ENCODE measurements at regions of chr1 and their contacts with region 1.

Region 1: DNA sequence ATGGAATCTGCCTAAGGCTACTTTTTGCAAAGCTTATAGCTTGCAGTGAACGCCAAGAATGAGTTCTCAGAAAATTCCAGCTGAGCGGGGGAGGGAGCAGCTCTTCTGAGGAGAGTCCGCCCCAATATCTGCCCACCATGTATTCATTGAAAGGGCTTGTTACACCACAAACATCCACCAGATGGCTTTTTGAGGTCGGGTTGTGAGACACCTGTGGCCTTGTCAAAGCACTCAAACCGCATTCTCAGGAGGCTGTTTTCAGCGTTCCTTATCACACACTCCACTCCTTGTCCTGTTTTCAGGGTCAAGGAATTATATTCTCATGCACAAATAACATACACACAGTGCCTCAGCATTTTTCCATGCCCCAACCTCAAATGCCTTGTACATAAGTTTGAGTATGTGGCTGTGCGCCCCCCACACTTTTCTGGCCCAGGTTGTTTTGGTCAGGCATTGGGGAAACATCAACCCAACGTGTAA is 3.9 kb upstream of the C4BPB start:
- DNase-seq: no peak
- ATAC-seq: peak; percentile 75

Region 2: GRCh38 chr1:206143537-206144172 is 941.1 kb before region 1 on chr1:
- intact Hi-C with region 1: no loop called
- DNase-seq: no peak
- ATAC-seq: no peak

Region 3: GRCh38 chr1:207268337-207268736 is 183.6 kb after region 1 on chr1:
- intact Hi-C with region 1: no loop called
- DNase-seq: no peak
- ATAC-seq: no peak

Region 4: DNA sequence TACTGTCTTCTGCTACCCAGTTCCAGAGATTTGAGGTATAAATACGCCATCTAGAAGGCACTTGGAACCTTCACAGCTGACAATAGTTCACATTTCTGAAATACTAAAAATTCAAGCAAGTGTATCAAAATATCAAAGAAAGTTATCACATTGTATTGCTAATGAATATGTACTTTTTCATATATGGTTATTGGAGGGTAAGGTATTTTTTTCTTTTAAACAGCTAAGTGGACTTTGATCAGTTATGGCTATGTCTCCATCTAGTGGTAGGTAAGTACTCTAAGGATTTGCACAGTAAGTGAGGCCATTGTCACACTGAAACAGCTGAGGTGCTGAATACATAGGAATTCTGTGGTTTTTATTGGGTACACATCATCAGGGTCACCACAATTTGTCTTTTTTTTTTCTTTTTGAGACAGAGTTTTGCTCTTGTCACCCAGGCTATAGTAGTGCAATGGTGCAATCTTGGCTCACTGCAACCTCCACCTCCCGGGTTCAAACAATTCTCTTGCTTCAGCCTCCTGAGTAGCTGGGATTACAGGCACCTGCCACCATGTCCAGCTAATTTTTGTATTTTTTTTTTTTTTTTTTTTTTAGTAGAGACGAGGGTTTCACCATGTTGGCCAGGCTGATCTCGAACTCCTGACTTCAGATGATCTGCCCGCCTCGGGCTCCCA is 320.2 kb after region 1 on chr1:
- intact Hi-C with region 1: loop called (anchors 5 kb)
- DNase-seq: no peak
- ATAC-seq: peak; percentile 73

Region 5: GRCh38 chr1:207499573-207499972 is 414.8 kb after region 1 on chr1:
- intact Hi-C with region 1: loop called (anchors 5 kb)
- DNase-seq: peak; percentile 65
- ATAC-seq: peak; percentile 65

Measured in Right ventricle myocardium superior (tissue), 1 donor.